ENCODE measurements at regions of chr16 and their contacts with region 1.

Region 1: DNA sequence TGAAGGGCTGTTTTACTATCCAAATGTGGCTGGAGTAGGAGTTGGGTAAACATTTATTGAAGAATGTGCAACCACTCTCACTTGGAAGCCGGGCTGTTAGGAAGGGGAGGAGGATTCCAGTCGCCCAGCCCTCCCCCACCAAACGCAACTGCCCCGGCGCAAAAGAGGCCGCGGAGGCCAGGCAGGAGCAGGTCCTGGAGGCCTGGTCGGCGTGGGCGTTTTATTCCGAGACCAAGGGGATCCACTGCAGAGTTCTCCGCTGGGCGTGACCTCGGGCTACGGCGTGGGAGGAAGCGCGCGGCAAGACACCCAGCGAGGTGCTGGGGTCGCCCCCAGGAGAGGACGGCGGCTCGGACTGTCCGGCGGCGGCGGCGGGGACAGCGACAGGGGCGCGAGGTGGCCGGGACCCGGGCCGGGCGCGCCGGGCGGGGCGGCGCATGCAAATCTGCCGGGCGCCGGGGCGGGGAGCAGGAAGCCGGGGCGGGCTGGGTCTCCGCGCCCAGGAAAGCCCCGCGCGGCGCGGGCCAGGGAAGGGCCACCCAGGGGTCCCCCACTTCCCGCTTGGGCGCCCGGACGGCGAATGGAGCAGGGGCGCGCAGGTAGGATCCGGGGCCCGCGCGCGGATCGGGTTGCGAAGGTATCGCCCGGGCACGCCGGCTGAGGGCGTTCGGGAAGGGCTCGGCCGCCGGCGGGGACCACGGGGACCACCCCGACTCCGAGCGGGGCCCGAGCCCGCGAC is at the start of gene IL4R:
- DNase-seq: peak in 6 of 7 donors; percentile 77 to 88 (median 84)
- H3K4me3 ChIP-seq: peak within 1 kb of the TSS; percentile 39 to 79 (median 56)
- H3K27ac ChIP-seq: peak within 1 kb of the TSS; percentile 82 to 95 (median 90)
- H3K4me1 ChIP-seq: peaks cover 39 to 43% of the 10 kb centered on the region in 2 donors
- H3K27me3 ChIP-seq: no peaks in the 10 kb centered on the region
- CTCF ChIP-seq: no peak
- POLR2A ChIP-seq: peak in 1 of 2 donors; percentile 69
- total RNA-seq, gene IL4R: 3.1 to 142 (median 60.5) TPM

Region 2: GRCh38 chr16:27235055-27235937 is 78.3 kb before region 1 on chr16:
- intact Hi-C with region 1: loop called in 1 of 2 experiments (anchors 10 kb)
- DNase-seq: peak; percentile 80 to 94 (median 90)
- H3K4me3 ChIP-seq: no peak overlapping the region
- H3K27ac ChIP-seq: peak overlapping the region in 4 of 5 donors; percentile 14 to 81 (median 47)
- H3K4me1 ChIP-seq: peaks cover 8 to 38% of the 10 kb centered on the region in 2 donors
- H3K27me3 ChIP-seq: no peaks in the 10 kb centered on the region
- CTCF ChIP-seq: peak; percentile 63 to 91 (median 86)
- POLR2A ChIP-seq: peak in 1 of 2 donors; percentile 11

Region 3: GRCh38 chr16:27264151-27264550 is 49.4 kb before region 1 on chr16:
- intact Hi-C with region 1: loop called in 1 of 2 experiments (anchors 5 kb)
- DNase-seq: peak; percentile 20 to 83 (median 73)
- H3K4me3 ChIP-seq: no peak overlapping the region
- H3K27ac ChIP-seq: peak overlapping the region in 2 of 5 donors; percentile 21 to 25
- H3K4me1 ChIP-seq: peaks cover 3 to 36% of the 10 kb centered on the region in 2 donors
- H3K27me3 ChIP-seq: no peaks in the 10 kb centered on the region
- CTCF ChIP-seq: no peak
- POLR2A ChIP-seq: no peak

Measured in adrenal gland (tissue), 19 donors.